Prostate gland (tissue), 2 donors: ENCODE measurements at regions of chr9 and their contacts with region 1.

Region 1: DNA sequence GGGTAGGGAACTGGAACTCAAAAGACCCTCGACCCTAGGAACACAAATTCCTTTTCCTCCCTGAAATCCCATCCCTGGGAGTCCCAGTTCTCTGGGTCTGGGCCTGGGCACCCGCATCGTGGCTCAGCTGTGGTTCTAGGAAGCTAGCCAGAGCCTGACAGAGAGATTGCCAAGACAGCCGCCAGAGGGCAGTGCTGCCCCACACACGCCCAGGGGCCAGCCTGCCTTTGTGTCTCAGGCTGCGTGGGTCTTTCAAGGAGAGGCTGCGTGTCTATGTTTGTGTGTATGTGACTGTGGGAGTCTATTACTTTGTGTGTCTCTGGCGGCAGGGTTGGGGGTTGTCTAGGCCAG is 32.0 kb upstream of the TTLL11 start:
- DNase-seq: peak; percentile 67
- H3K4me3 ChIP-seq: no peak overlapping the region
- H3K27ac ChIP-seq: no peak overlapping the region
- H3K4me1 ChIP-seq: peaks cover 4% of the 10 kb centered on the region
- H3K27me3 ChIP-seq: no peaks in the 10 kb centered on the region
- CTCF ChIP-seq: peak; percentile 92 to 96 (median 96)
- POLR2A ChIP-seq: no peak

Region 2: DNA sequence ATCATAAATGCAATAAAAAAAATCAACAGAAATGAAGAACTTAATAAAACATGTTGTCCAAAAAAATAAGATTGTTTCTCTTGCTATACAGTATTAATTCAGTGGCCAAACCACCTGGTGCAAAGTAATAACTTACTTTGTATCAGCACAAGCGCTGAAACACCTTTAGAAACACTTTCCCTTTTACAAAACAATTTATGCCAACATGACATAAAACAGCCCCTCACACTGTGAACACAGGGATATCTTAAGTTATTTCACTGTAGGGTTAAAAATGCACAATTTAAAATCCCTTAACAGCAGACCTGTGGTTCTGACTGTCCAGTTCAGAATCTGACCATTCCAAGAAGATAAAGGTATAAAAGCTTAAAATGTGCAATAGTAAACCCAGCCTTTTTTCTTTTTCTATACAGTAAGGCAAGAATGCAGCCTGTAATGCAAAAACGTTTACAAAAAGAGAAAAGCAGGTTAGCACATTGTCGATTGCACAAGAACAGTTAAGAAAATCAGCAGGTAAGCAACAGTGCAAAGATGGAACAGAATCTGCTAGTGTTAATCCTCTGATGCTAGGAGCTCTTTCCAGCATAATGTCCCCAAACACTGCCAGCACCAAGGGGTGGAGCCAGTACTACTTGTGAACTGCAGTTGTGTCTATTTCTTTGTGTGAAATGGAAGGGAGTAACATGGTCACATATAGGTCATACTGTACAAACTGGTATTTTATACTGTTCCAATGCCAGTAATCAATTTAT is 945.0 kb before region 1 on chr9:
- intact Hi-C with region 1: no loop called
- DNase-seq: no peak
- H3K4me3 ChIP-seq: no peak overlapping the region
- H3K27ac ChIP-seq: no peak overlapping the region
- H3K4me1 ChIP-seq: no peaks in the 10 kb centered on the region
- H3K27me3 ChIP-seq: no peaks in the 10 kb centered on the region
- CTCF ChIP-seq: no peak
- POLR2A ChIP-seq: no peak

Region 3: GRCh38 chr9:122056484-122056883 is 68.6 kb before region 1 on chr9:
- intact Hi-C with region 1: no loop called
- DNase-seq: no peak
- H3K4me3 ChIP-seq: no peak overlapping the region
- H3K27ac ChIP-seq: no peak overlapping the region
- H3K4me1 ChIP-seq: no peaks in the 10 kb centered on the region
- H3K27me3 ChIP-seq: no peaks in the 10 kb centered on the region
- CTCF ChIP-seq: no peak
- POLR2A ChIP-seq: no peak

Region 4: DNA sequence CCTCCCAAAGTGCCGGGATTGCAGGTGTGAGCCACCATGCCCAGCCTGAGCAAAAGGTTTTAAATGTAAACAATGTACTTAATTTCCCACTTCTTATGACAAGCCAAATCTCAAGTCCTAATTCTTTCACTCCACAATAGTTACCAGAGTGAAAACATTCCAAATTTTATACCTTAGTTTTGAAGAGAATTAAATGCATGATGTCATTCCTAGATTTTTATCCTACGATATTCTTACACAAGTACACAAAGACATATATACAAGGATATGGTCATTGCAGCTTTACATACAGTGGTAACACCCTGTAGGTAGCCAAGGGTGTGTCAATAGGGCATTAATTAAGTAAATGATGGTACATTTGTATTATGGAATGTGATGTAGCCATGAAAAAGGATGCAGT is 57.4 kb before region 1 on chr9:
- intact Hi-C with region 1: no loop called
- DNase-seq: no peak
- H3K4me3 ChIP-seq: no peak overlapping the region
- H3K27ac ChIP-seq: no peak overlapping the region
- H3K4me1 ChIP-seq: no peaks in the 10 kb centered on the region
- H3K27me3 ChIP-seq: no peaks in the 10 kb centered on the region
- CTCF ChIP-seq: no peak
- POLR2A ChIP-seq: no peak

Region 5: DNA sequence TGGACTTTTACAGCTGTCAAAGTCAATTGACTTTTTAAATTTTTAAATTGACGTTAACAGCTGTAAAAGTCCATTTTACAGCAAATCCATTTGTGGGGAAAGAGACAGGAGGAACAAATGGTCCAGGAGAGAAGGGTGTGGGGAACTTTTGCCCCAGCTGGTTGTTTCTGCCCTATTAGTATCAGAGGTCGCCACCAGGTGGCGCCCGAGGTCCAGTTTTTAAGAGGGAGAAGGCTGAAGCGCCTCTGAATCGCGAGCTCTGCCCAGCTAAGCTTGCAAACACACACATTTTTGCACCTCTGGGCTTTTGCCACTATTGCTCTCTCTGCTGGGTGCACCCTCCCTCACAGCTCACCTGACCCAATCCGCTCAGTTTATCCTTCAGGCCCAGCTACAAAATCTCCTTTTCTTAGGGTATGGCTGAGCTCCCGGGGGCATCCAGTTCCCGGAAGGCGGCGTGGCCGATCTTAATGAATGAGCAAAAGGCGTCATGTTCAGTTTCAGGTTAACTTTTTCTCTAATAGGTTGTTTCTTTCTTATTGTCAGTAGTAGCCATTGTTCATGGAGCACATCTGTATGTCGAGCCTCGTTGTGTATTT is 25.8 kb before region 1 on chr9:
- intact Hi-C with region 1: loop called (anchors 1 kb)
- DNase-seq: peak; percentile 71
- H3K4me3 ChIP-seq: no peak overlapping the region
- H3K27ac ChIP-seq: no peak overlapping the region
- H3K4me1 ChIP-seq: no peaks in the 10 kb centered on the region
- H3K27me3 ChIP-seq: no peaks in the 10 kb centered on the region
- CTCF ChIP-seq: peak; percentile 80 to 88 (median 82)
- POLR2A ChIP-seq: no peak

Region 6: GRCh38 chr9:122168356-122168755 is 43.2 kb after region 1 on chr9:
- intact Hi-C with region 1: no loop called
- DNase-seq: no peak
- H3K4me3 ChIP-seq: no peak overlapping the region
- H3K27ac ChIP-seq: no peak overlapping the region
- H3K4me1 ChIP-seq: no peaks in the 10 kb centered on the region
- H3K27me3 ChIP-seq: no peaks in the 10 kb centered on the region
- CTCF ChIP-seq: no peak
- POLR2A ChIP-seq: no peak

Region 7: DNA sequence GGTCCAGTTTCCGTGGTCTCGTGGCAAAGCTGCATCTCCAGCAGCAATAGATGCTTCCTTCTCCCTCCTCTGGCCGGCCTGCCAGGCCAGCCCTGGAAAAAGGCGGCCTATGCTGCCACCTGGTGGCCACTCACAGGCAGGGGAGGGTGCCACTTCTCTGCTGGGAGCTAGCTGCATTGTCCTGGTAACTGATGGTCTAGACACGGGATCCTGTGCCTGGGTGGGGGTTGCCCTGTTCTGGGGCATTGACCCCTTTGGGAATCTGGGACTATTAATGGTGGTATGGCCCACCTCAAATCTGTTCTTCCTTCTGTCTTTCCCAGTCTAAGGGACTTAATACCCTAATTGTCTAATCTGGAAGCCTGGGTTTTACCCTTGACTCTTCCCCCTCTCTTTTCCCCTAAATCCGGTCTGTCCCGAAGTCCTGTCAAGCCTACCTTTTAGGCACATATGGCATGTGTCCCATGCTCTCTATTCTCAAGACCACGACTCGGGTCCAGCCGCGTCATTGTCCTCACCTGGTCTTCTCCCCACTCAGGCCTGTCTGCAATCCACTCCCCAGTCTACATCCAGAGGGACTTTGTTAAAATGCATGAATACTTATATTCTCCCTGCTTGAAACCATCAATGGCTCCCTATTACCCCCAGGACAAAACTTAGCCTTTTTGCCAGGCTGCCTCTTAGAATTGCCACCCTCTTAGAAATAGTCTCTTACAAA is 225.7 kb after region 1 on chr9:
- intact Hi-C with region 1: loop called (anchors 1 kb)
- DNase-seq: peak; percentile 72
- H3K4me3 ChIP-seq: no peak overlapping the region
- H3K27ac ChIP-seq: no peak overlapping the region
- H3K4me1 ChIP-seq: no peaks in the 10 kb centered on the region
- H3K27me3 ChIP-seq: no peaks in the 10 kb centered on the region
- CTCF ChIP-seq: peak; percentile 96 to 98 (median 97)
- POLR2A ChIP-seq: no peak

Region 8: GRCh38 chr9:122453677-122454135 is 328.6 kb after region 1 on chr9:
- intact Hi-C with region 1: loop called (anchors 5 kb)
- DNase-seq: no peak
- H3K4me3 ChIP-seq: no peak overlapping the region
- H3K27ac ChIP-seq: no peak overlapping the region
- H3K4me1 ChIP-seq: no peaks in the 10 kb centered on the region
- H3K27me3 ChIP-seq: no peaks in the 10 kb centered on the region
- CTCF ChIP-seq: no peak
- POLR2A ChIP-seq: no peak